Right ventricle myocardium inferior (tissue), 1 donor: ENCODE measurements at regions of chr6 and their contacts with region 1.

Region 1: DNA sequence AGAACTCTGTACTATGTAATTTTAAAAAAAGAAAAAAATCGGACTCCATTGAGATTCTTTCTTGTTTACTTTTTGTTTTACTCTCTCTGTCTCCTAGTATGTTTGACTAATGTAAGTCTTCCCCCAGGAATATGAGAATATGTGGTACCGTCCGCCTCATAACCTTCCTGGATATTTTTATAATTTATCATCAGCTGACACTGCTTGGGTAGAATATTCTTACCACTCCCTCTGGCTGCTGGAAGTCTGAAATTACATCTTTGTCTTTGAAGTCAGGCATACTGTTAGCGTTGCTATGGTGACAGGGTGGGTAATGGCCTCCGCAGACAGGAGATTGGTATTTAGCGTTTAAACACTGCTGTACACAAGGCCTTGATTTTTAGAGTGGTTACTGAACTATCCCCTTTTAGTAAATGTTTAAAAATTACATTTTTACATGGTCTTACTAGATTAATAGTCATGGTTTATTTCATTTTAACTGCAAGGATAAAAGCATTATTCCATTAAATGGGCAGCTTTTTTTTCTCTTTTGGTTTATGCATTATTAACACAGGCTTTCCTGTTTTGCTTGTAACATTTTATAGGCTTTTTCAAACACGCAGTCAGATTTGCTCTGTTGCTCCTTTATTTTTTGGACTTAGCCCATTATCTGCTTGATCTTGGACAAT is 176.4 kb downstream of the ARID1B start:
- DNase-seq: no peak
- ATAC-seq: peak; percentile 73

Region 2: GRCh38 chr6:156564127-156564806 is 389.3 kb before region 1 on chr6:
- intact Hi-C with region 1: loop called (anchors 10 kb)
- DNase-seq: peak; percentile 90
- ATAC-seq: peak; percentile 94

Region 3: GRCh38 chr6:156703719-156704118 is 249.9 kb before region 1 on chr6:
- intact Hi-C with region 1: no loop called
- DNase-seq: no peak
- ATAC-seq: no peak

Region 4: GRCh38 chr6:156781861-156782631 is 171.6 kb before region 1 on chr6:
- intact Hi-C with region 1: loop called (anchors 2 kb)
- DNase-seq: no peak
- ATAC-seq: no peak

Region 5: GRCh38 chr6:156886409-156886808 is 67.2 kb before region 1 on chr6:
- intact Hi-C with region 1: loop called (anchors 5 kb)
- DNase-seq: no peak
- ATAC-seq: peak; percentile 28